ENCODE measurements at regions of chr1 and their contacts with region 1.

Region 1: GRCh38 chr1:197775282-197776262 is at the start of gene DENND1B:
- DNase-seq: peak; percentile 90
- ATAC-seq: peak; percentile 65
- H3K4me3 Mint-ChIP-seq: peak within 1 kb of the TSS; percentile 89
- H3K27ac Mint-ChIP-seq: peak within 1 kb of the TSS; percentile 99
- H3K4me1 Mint-ChIP-seq: peaks cover 65% of the 10 kb centered on the region
- H3K27me3 Mint-ChIP-seq: no peaks in the 10 kb centered on the region
- total RNA-seq, gene DENND1B: 22.5 to 27.9 TPM

Region 2: GRCh38 chr1:197750366-197750765 is 25.2 kb before region 1 on chr1:
- CTCF ChIA-PET with region 1: no interaction called
- POLR2A ChIA-PET with region 1: no interaction called
- DNase-seq: no peak
- ATAC-seq: no peak
- H3K4me3 Mint-ChIP-seq: no peak overlapping the region
- H3K27ac Mint-ChIP-seq: no peak overlapping the region
- H3K4me1 Mint-ChIP-seq: peaks cover 7% of the 10 kb centered on the region
- H3K27me3 Mint-ChIP-seq: no peaks in the 10 kb centered on the region

Region 3: DNA sequence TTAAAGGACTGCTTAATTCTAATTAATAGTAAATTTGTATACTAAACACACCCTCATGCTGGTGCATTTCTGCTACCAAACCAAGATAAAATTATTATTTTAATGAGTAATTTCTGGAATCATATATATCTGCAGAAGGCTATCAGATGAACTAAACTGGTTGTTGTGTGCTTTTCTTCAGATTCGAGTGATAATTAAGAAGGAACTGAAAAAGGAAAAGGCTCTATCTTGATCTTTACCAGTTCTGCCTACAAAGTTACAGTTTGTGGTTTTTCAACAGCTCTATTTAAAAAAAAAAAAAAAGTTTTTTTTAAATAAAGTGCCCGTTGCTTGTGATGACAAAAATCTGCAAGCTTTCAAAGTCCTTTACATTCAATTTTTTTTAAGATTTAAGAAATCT is 14.0 kb before region 1 on chr1:
- CTCF ChIA-PET with region 1: interaction called, 5 read pairs
- POLR2A ChIA-PET with region 1: interaction called, 11 read pairs
- DNase-seq: no peak
- ATAC-seq: no peak
- H3K4me3 Mint-ChIP-seq: no peak overlapping the region
- H3K27ac Mint-ChIP-seq: no peak overlapping the region
- H3K4me1 Mint-ChIP-seq: peaks cover 28% of the 10 kb centered on the region
- H3K27me3 Mint-ChIP-seq: no peaks in the 10 kb centered on the region

Region 4: GRCh38 chr1:197801111-197801482 is 25.5 kb after region 1 on chr1:
- CTCF ChIA-PET with region 1: no interaction called
- POLR2A ChIA-PET with region 1: no interaction called
- DNase-seq: no peak
- ATAC-seq: no peak
- H3K4me3 Mint-ChIP-seq: no peak overlapping the region
- H3K27ac Mint-ChIP-seq: no peak overlapping the region
- H3K4me1 Mint-ChIP-seq: no peaks in the 10 kb centered on the region
- H3K27me3 Mint-ChIP-seq: no peaks in the 10 kb centered on the region

Measured in activated CD8-positive, alpha-beta T cell treated with anti-CD3 and anti-CD28 coated beads, Interleukin-2, amount 10 ng/mL, durations not matched to agents 7 days and 5 days (primary cell).